Right cardiac atrium (tissue), 5 donors: ENCODE measurements at regions of chr10 and their contacts with region 1.

Region 1: DNA sequence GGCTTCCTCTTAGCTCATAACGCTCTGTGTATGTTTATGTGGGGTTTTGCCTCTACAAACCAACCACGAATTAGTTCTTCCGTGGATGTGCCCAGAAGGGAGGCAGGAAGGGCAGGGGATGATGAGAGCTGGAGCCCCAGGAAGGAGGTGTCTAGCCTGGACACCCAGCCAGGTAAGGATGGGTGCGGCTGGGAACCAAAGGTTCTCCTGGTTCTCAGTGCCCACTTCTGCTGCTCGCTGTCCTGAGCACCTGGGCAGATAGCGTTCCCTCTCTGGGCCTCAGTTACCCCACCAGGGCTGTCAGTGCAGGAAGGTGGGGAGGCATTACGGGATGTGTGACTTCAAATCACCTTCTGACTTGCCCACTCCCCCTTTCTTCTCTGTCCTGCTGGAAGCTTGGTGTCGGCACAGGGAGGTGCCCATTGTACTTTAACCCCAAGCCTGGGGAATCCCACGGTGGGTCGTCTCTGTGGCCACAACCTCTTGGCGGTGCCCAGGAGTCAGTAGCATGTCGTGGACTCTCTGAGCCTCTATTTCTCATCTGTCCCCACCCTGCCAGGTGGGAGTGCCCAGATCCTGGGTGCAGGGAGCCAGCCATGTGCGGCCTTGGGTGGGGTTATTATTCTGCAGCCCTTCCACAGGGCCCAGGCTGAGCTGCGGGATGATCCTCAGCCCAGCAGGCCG is 18.7 kb upstream of the PCBD1 start:
- DNase-seq: peak in 1 of 3 donors; percentile 36
- ATAC-seq: peak in 1 of 2 donors; percentile 3
- H3K4me3 ChIP-seq: no peak overlapping the region
- H3K27ac ChIP-seq: peak overlapping the region; percentile 21
- H3K4me1 ChIP-seq: no peaks in the 10 kb centered on the region
- H3K27me3 ChIP-seq: no peaks in the 10 kb centered on the region

Region 2: DNA sequence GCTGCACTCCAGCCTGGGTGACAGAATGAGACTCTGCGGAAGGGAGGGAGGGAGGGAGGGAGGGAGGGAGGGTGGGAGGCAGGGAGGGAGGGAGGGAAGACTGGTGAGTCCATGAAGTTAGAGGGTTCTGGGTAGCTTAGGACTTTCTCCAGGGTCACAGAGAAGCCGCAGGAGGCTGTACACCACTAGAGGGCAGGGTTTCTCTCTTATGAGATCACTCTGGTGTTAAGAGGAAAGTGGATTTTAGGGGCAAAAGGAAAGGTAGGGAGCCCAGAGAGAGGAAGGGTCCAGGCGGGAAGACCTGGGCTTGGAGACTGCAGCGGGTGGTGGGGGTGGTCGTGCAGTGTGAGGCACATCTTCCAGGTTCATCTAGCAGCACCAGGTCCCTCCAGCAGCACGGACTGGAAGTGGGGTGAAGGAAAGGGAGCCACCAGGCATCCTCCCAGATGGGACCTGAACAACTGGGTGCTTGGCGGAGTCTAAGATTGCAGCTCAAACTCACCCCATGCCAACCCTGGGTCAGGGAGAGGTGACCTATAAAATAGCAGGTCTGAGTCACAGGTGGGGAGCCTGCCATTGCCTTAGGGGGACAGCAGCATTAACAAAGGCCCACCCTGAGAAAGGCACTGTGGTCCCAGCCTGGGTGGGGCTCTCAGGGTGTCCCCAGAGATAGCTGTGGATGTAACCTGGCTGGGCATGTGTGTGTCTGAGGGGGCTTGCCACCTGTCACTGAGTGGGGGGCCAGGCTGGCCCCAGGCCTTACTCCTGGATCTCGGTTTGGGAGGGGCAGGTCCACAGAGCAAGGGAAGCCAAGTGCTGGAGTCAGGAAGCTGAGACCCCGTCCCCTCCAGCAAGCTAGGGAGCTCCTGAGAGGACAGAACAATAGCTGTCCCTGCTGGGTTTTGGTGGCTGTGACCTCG is 363.5 kb after region 1 on chr10:
- intact Hi-C with region 1: no loop called
- DNase-seq: peak in 2 of 3 donors; percentile 69 to 82
- ATAC-seq: peak; percentile 23 to 39
- H3K4me3 ChIP-seq: no peak overlapping the region
- H3K27ac ChIP-seq: peak overlapping the region; percentile 61
- H3K4me1 ChIP-seq: peaks cover 12% of the 10 kb centered on the region
- H3K27me3 ChIP-seq: no peaks in the 10 kb centered on the region

Region 3: GRCh38 chr10:71285180-71285545 is 378.1 kb after region 1 on chr10:
- intact Hi-C with region 1: loop called in 1 of 4 experiments (anchors 5 kb)
- DNase-seq: peak in 2 of 3 donors; percentile 64 to 70
- ATAC-seq: peak; percentile 45 to 64
- H3K4me3 ChIP-seq: no peak overlapping the region
- H3K27ac ChIP-seq: no peak overlapping the region
- H3K4me1 ChIP-seq: no peaks in the 10 kb centered on the region
- H3K27me3 ChIP-seq: no peaks in the 10 kb centered on the region